ENCODE measurements at regions of chr6 and their contacts with region 1.

Region 1: DNA sequence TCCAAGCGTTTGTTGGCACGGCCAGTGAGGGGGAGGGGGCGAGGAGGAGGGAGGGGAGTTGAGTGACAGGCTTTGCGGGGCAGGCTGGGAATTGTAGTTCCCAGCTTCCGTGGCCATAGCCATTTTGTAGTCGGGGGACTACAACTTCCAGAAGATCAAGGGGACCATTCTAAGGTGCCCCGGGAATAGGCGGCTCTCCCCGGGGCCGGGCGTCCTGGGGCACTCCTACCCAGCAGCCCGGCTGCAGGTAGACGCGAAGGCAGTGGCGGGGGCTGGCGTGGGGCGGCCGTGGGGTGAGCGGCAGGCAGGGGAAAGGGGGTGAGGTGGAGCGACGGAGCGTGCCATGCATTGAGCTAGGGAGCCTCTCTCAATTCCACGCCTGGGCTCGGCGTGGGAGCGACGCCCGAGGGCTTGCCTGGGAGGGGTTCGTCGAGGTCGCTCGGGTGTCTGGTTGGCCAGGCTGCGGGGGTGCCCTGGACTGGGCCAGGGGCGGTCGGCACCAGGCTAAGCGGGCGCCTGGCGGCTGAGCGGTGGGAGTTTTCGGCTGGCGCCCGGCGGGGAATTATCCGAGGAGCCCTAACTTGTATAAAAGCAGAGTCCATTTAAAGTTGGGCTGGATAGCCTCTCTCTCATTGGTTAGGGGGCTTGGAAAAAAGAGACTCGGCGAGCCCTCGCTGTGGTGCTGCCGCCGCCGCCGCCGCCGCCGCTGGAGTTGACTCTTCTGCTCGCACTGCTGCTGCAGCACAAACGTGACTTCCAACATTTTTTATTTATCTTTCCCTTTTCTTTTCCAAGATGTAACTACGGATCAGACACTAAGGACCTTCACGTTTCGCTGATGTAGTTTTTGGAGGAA is at the start of gene JARID2:
- DNase-seq: peak; percentile 97 to 99 (median 97)
- H3K4me3 ChIP-seq: peak within 1 kb of the TSS; percentile 91
- H3K27ac ChIP-seq: peak within 1 kb of the TSS; percentile 91 to 92
- H3K4me1 ChIP-seq: peaks cover 1% of the 10 kb centered on the region
- H3K27me3 ChIP-seq: no peaks in the 10 kb centered on the region
- CTCF ChIP-seq: peak in 2 of 3 donors; percentile 5 to 20
- EP300 ChIP-seq: no peak
- POLR2A ChIP-seq: peak; percentile 55
- total RNA-seq, gene JARID2: 6.1 to 17.4 (median 8.7) TPM

Region 2: DNA sequence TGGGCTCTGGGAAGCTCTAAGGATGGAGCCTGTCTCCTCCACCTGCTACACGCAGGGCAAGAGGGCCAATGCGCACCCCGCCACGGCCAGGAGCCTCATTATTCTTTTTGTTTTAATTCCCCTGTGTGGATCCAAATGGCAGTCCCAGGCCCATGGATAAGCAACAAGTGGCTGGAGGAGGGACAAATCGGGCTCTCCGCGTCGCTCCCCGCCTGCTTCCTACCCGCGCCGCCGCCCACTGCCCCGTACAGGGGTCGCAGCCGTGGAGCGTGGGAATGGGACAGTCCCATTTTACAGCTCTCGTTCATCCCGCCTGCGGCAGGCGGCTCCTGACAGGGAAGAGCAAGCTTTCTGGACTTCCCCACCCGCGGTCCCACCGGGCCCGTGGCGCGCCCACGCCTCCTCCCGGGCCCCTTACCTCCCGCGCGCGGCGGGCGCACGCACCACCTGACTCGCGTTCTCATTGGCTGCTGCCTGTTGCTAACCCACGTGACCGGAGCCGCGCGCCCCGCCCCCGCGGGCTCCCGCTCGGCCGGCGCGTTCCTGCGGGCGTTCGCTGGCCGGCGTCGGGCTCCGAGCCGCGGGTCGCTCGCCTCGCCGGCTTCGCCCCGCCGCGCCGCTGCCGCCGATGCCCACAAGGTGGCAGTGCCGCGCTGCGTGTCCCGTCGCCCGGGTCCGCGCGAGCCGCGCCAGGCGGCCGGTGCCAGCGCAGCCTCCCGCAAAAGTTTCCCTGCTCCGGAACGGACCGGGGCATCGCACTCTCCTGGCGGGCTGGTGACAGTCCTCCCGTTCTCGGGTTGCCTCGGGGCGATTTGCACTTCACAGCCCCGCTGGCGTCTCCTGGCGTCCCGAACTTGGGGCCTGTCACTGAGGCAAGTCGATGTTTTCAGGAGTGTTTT is 1034.7 kb before region 1 on chr6:
- intact Hi-C with region 1: loop called in 2 of 4 experiments (anchors 5 to 10 kb)
- DNase-seq: peak; percentile 90 to 96 (median 94)
- H3K4me3 ChIP-seq: peak overlapping the region; percentile 52
- H3K27ac ChIP-seq: peak overlapping the region; percentile 74 to 78
- H3K4me1 ChIP-seq: peaks cover 2% of the 10 kb centered on the region
- H3K27me3 ChIP-seq: no peaks in the 10 kb centered on the region
- CTCF ChIP-seq: peak; percentile 28 to 95 (median 94)
- EP300 ChIP-seq: no peak
- POLR2A ChIP-seq: no peak

Region 3: DNA sequence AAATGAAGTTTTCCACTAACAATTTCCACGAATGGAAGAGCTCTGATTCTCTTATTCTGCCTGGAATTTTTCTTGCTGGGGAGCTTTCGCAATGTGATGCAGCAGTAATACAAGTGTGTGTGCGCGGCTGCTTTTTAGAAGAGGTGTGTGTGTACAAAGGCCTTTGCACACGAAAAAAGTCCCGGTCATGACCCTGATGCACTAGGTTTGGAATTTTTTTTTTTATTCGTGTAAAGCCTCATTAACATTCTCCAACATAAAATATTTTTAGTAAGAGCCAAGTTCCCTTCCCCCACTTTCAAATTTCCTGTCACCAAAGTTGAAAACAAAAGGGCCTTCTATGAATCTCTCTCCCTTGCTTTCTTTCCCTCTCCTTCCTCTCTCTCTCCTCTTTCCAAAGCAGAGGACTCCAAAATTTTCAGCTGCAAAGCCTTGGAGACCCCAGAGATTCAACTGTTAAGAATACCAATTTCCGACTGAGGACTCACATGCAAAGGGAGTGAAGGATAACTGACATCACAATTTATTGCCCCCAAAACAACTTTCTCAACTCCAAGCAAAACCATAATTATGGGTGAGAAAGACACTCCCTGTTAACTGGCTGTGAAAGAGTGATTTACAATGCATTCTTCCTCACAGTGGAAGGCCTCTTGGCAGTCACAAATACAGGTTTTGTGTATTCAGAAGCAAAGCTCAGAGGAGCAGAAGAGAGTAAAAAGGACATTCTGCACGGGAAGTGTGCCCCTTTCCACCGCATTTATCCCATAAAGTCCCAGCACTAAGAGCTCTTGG is 420.9 kb before region 1 on chr6:
- intact Hi-C with region 1: no loop called
- DNase-seq: no peak
- H3K4me3 ChIP-seq: no peak overlapping the region
- H3K27ac ChIP-seq: no peak overlapping the region
- H3K4me1 ChIP-seq: no peaks in the 10 kb centered on the region
- H3K27me3 ChIP-seq: no peaks in the 10 kb centered on the region
- CTCF ChIP-seq: no peak
- EP300 ChIP-seq: no peak
- POLR2A ChIP-seq: no peak

Region 4: DNA sequence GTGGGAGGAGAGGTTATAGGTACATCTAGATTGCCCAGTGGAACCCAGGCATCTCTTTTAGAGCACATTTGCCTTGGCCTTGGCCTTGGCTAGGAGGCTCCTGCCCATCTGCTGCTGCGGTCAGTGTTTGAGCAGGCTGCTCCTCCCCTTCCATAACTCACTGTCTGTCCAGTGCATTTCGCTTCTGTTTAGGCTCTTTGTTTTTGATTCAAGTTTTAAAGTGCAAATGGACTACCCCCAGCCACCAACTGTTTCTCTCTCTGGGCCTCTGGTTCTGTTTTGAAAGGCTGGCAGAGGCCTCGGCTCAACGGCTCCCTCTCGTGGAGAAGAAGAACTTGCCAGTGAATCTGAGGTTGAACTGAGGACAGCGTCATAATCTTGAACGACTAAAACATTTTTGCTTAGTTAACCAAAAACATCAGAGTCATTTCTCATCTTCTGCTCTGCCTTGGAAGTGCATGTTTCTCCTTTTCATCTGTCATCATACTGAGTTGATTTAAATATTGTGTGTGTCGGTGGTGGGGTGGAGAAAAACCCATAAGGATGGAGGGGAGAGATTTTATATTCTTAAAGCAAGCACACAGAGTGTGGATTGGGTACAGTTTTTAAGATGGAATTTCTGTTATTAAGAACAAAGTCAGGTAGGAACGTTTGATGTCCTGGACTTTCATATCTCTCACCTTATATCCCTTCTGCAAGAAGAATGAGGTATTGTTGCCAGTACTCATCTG is 245.8 kb after region 1 on chr6:
- intact Hi-C with region 1: loop called in 1 of 4 experiments (anchors 10 kb)
- DNase-seq: peak; percentile 76 to 88 (median 83)
- H3K4me3 ChIP-seq: no peak overlapping the region
- H3K27ac ChIP-seq: peak overlapping the region in 1 of 2 donors; percentile 14
- H3K4me1 ChIP-seq: peaks cover 15% of the 10 kb centered on the region
- H3K27me3 ChIP-seq: no peaks in the 10 kb centered on the region
- CTCF ChIP-seq: peak; percentile 85 to 98 (median 87)
- EP300 ChIP-seq: no peak
- POLR2A ChIP-seq: no peak